Activated B cell treated with CpG ODN at 0.5 μM for 24 hours (primary cell): ENCODE measurements at regions of chr15 and their contacts with region 1.

Region 1: GRCh38 chr15:75367913-75368688 is at the start of gene MAN2C1:
- DNase-seq: peak; percentile 92
- ATAC-seq: peak; percentile 93
- H3K4me3 Mint-ChIP-seq: peak within 1 kb of the TSS; percentile 90
- H3K27ac Mint-ChIP-seq: peak within 1 kb of the TSS; percentile 92
- H3K4me1 Mint-ChIP-seq: peaks cover 26% of the 10 kb centered on the region
- H3K27me3 Mint-ChIP-seq: no peaks in the 10 kb centered on the region
- CTCF ChIP-seq: no peak
- total RNA-seq, gene MAN2C1: 187 and 213 TPM in 2 replicates

Region 2: DNA sequence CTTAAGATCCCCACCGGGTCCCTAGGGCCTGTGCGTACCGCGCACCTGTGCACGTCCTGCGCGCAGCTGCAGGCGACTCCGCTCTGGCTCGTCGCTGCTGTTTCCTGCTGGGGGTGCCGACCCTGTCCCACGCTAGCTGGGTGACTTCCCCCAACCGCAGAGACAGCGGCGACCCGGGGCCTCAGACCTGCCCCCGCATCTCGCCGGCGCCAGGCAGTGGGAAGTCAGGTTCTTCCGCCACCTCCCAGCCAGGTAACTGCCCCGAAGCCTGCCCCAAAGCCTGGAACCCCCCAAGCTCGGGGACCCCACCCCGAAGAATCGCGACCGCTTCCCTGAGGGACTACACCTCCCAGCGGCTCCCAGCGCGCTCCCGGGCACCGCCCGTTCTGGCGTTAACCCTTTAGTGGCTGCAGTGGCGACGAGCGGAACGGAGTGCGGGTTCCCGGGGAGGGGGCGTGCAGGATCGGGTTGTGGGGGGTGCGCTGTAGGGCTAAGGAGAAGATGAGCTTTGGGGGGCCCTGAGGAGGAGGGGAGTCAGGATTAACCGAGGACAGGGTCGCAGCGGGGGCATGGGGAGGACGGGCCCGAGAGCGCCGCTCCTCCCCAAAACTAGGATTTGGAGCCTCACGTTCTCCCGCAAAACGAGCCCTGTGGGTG is 20.8 kb before region 1 on chr15:
- CTCF ChIA-PET with region 1: interaction called, 11 read pairs
- POLR2A ChIA-PET with region 1: interaction called, 52 read pairs
- intact Hi-C with region 1: loop called (anchors 1 kb)
- DNase-seq: peak; percentile 69
- ATAC-seq: peak; percentile 77
- H3K4me3 Mint-ChIP-seq: peak overlapping the region; percentile 86
- H3K27ac Mint-ChIP-seq: peak overlapping the region; percentile 85
- H3K4me1 Mint-ChIP-seq: peaks cover 46% of the 10 kb centered on the region
- H3K27me3 Mint-ChIP-seq: peaks cover 1% of the 10 kb centered on the region
- CTCF ChIP-seq: no peak

Region 3: DNA sequence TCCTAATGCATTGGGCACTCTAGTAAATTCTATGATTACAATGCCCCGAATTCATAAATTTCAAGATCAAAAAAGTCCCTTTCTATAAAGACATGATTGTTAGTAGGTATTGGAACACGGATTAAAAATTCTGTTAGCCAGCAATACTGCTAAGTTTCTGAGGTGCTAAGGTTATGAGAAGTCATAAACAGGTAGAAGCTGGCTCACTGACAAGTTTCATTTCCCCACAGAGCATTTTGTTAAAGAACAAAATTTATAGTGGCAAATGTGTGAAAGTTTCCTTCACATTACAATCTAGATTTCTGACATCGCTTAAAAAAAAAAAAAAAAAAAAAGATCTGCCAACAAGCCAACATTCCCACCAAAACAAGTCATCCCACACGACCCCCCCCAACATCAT is 12.7 kb after region 1 on chr15:
- CTCF ChIA-PET with region 1: interaction called, 12 read pairs
- POLR2A ChIA-PET with region 1: interaction called, 21 read pairs
- intact Hi-C with region 1: no loop called
- DNase-seq: no peak
- ATAC-seq: no peak
- H3K4me3 Mint-ChIP-seq: no peak overlapping the region
- H3K27ac Mint-ChIP-seq: peak overlapping the region; percentile 42
- H3K4me1 Mint-ChIP-seq: peaks cover 29% of the 10 kb centered on the region
- H3K27me3 Mint-ChIP-seq: no peaks in the 10 kb centered on the region
- CTCF ChIP-seq: no peak

Region 4: GRCh38 chr15:75578948-75579920 is 211.1 kb after region 1 on chr15 and contains the start of gene PTPN9:
- CTCF ChIA-PET with region 1: interaction called, 4 read pairs
- POLR2A ChIA-PET with region 1: interaction called, 10 read pairs
- intact Hi-C with region 1: no loop called
- DNase-seq: peak; percentile 63
- ATAC-seq: peak; percentile 87
- H3K4me3 Mint-ChIP-seq: peak within 1 kb of the TSS; percentile 92
- H3K27ac Mint-ChIP-seq: peak within 1 kb of the TSS; percentile 82
- H3K4me1 Mint-ChIP-seq: peaks cover 19% of the 10 kb centered on the region
- H3K27me3 Mint-ChIP-seq: no peaks in the 10 kb centered on the region
- CTCF ChIP-seq: no peak
- total RNA-seq, gene PTPN9: 18.2 and 19.2 TPM in 2 replicates

Region 5: DNA sequence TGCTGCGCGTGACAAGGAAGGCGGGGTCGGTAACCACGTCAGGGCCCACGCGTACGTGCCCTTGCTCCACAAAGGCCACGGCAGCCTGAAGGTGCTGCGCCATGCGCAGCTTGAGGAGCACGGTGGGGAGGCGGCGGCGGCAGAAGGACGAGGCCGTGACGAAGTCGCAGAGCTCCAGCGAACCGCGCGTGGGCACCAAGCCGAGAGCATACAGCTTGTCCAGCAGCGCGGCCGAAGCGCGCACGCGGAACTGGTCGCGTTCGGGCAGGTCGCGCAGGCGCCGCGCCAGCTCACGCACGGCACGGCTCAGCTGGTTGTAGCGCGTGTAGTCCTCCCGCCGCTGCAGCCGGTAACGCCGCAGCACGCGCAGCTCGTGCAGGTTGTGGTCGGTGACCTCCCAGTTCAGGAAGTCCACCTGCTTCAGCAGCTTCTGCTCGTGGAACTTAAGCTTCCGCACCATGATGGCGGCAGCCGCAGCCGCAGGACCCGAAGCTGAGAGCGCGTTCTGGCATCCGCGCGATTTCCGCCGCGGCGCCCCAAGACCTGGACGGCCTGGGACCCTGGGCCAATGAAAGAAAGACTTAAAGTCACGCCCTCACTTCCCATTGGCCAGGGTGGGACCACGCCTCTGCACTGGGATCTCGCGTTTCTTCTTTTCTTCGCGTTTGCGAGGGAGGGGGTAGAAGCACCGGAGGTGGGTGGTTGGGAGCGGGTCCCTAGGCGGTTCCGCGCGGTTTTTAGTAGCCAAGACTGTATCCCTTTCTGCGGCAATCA is 271.8 kb after region 1 on chr15 and contains the start of gene IMP3:
- CTCF ChIA-PET with region 1: interaction called, 29 read pairs
- POLR2A ChIA-PET with region 1: interaction called, 58 read pairs
- intact Hi-C with region 1: loop called (anchors 1 kb)
- DNase-seq: peak; percentile 83
- ATAC-seq: peak; percentile 94
- H3K4me3 Mint-ChIP-seq: peak within 1 kb of the TSS; percentile 91
- H3K27ac Mint-ChIP-seq: peak within 1 kb of the TSS; percentile 92
- H3K4me1 Mint-ChIP-seq: peaks cover 38% of the 10 kb centered on the region
- H3K27me3 Mint-ChIP-seq: no peaks in the 10 kb centered on the region
- CTCF ChIP-seq: no peak
- total RNA-seq, gene IMP3: 65.6 and 72.6 TPM in 2 replicates